CD4-positive, alpha-beta memory T cell (primary cell): ENCODE measurements at regions of chr1 and their contacts with region 1.

Region 1: DNA sequence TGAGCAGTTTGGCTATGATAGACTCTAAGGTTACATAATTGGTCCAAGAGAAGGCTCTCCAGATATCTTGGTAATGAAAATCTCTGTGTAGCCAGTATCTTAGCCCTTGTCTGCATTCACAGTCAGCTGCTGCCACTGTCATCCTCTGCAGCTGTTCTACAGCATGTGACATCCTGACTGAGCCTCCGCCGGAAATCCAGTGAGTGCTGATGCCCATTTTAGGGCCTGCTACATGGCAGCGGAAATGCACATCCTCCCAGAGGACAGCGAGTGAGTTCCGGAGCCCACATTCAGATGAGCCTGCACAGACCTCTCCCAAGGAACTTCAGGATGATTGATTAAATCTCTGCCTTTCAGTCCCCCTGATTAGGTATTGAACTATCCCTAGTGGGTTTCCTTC is 237.1 kb downstream of the HHIPL2 start:
- DNase-seq: peak in 4 of 5 donors; percentile 9 to 43 (median 18)
- H3K4me3 ChIP-seq: no peak overlapping the region
- H3K4me3 Mint-ChIP-seq: peak overlapping the region in 3 of 8 donors; percentile 4 to 26 (median 5)
- H3K27ac ChIP-seq: no peak overlapping the region
- H3K27ac Mint-ChIP-seq: no peak overlapping the region
- H3K4me1 ChIP-seq: no peaks in the 10 kb centered on the region
- H3K4me1 Mint-ChIP-seq: peaks cover 6 to 23% (median 12%) of the 10 kb centered on the region in 4 donors
- H3K27me3 ChIP-seq: no peaks in the 10 kb centered on the region
- H3K27me3 Mint-ChIP-seq: peaks cover 0 to under 1% of the 10 kb centered on the region in 2 donors

Region 2: GRCh38 chr1:222182641-222183040 is 128.2 kb before region 1 on chr1:
- CTCF ChIA-PET with region 1: no interaction called
- POLR2A ChIA-PET with region 1: no interaction called
- intact Hi-C with region 1: no loop called
- DNase-seq: no peak
- H3K4me3 ChIP-seq: no peak overlapping the region
- H3K4me3 Mint-ChIP-seq: no peak overlapping the region
- H3K27ac ChIP-seq: no peak overlapping the region
- H3K27ac Mint-ChIP-seq: peak overlapping the region in 1 of 7 donors; percentile 53
- H3K4me1 ChIP-seq: no peaks in the 10 kb centered on the region
- H3K4me1 Mint-ChIP-seq: no peaks in the 10 kb centered on the region
- H3K27me3 ChIP-seq: no peaks in the 10 kb centered on the region
- H3K27me3 Mint-ChIP-seq: peaks cover 0 to 1% of the 10 kb centered on the region in 2 donors

Region 3: DNA sequence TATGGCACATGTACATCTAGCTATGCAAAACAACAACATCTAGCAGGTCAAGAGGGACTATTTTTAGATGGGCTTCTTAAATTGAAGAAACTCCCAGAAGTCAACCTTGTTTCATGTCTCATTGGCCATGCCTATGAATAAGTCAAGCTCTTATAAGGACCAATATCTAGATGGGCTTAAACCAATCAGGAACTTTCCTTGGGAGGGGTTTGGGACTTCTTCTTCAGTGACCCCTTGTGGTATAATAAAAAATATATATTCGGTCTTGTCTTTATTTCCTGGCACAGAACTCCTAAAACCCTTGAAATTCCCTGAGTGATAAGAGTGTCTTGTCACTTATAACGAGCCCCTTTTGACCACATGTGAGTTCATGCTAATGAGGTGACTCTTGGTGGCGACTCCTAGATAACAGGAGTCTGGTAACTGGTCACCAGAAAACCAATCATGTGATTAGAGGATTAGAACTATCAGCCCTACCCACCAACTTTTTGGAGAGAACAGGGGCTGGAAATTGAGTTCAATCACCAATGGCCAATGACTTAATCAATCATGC is 18.7 kb after region 1 on chr1:
- CTCF ChIA-PET with region 1: no interaction called
- POLR2A ChIA-PET with region 1: interaction called, 3 read pairs
- intact Hi-C with region 1: loop called (anchors 1 kb)
- DNase-seq: no peak
- H3K4me3 ChIP-seq: no peak overlapping the region
- H3K4me3 Mint-ChIP-seq: no peak overlapping the region
- H3K27ac ChIP-seq: no peak overlapping the region
- H3K27ac Mint-ChIP-seq: peak overlapping the region in 1 of 7 donors; percentile 37
- H3K4me1 ChIP-seq: no peaks in the 10 kb centered on the region
- H3K4me1 Mint-ChIP-seq: peaks cover 7 to 12% (median 8%) of the 10 kb centered on the region in 4 donors
- H3K27me3 ChIP-seq: no peaks in the 10 kb centered on the region
- H3K27me3 Mint-ChIP-seq: no peaks in the 10 kb centered on the region